ENCODE measurements at regions of chr10 and their contacts with region 1.

Region 1: GRCh38 chr10:69061305-69062161 is 26.4 kb upstream of the SRGN start:
- DNase-seq: peak; percentile 45
- ATAC-seq: peak; percentile 79
- H3K4me3 Mint-ChIP-seq: peak overlapping the region; percentile 27
- H3K27ac Mint-ChIP-seq: peak overlapping the region; percentile 45
- H3K4me1 Mint-ChIP-seq: peaks cover 57% of the 10 kb centered on the region
- H3K27me3 Mint-ChIP-seq: no peaks in the 10 kb centered on the region

Region 2: GRCh38 chr10:68981074-68981473 is 80.5 kb before region 1 on chr10:
- CTCF ChIA-PET with region 1: no interaction called
- POLR2A ChIA-PET with region 1: interaction called, 14 read pairs
- DNase-seq: no peak
- ATAC-seq: peak; percentile 69
- H3K4me3 Mint-ChIP-seq: no peak overlapping the region
- H3K27ac Mint-ChIP-seq: no peak overlapping the region
- H3K4me1 Mint-ChIP-seq: peaks cover 20% of the 10 kb centered on the region
- H3K27me3 Mint-ChIP-seq: no peaks in the 10 kb centered on the region

Region 3: DNA sequence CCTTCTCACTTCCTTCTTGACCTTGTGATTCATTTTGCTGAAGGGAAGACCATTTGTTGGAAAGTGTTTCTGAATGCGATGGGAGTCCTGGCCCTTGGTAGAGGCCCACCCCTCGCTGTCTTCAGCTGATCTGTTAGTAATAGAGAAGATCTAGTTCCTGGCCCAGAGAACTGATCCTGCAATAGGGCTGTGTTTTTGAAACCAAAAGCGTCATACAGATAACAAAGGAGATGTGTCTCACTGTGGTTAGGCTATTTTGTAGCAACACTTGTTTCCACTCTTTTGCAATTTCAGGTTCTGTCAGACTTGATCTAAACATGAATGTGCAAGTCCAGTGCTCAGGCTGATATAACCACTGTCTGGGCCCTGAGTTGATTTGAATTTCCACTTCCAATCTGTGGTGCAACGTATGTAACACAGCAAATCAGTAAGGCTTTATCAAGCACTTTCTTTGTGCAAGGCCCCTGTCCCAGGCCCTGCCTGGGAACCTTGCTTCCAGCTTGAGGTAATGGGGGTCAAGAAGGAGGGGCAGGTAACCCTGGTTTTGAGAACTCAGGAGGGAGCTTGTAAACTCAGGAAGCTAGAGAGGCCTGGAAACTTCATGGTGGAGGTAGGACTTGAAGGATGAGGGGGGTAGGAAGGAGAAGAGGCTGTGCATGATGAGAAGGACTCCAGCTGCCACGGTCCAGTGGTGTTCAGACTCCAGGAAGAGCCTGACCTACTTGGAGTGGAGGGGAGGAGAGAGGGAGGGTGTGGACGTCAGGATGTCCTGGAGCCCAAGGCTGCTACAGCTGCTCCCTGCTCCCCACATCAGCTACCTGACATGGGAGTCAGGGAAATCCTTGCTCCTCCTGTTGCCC is 15.9 kb before region 1 on chr10:
- CTCF ChIA-PET with region 1: interaction called, 19 read pairs
- POLR2A ChIA-PET with region 1: interaction called, 14 read pairs
- DNase-seq: peak; percentile 41
- ATAC-seq: peak; percentile 75
- H3K4me3 Mint-ChIP-seq: peak overlapping the region; percentile 29
- H3K27ac Mint-ChIP-seq: peak overlapping the region; percentile 95
- H3K4me1 Mint-ChIP-seq: peaks cover 44% of the 10 kb centered on the region
- H3K27me3 Mint-ChIP-seq: no peaks in the 10 kb centered on the region

Region 4: GRCh38 chr10:69051303-69051702 is 10.2 kb before region 1 on chr10:
- CTCF ChIA-PET with region 1: interaction called, 20 read pairs
- POLR2A ChIA-PET with region 1: interaction called, 10 read pairs
- DNase-seq: peak; percentile 77
- ATAC-seq: peak; percentile 70
- H3K4me3 Mint-ChIP-seq: no peak overlapping the region
- H3K27ac Mint-ChIP-seq: peak overlapping the region; percentile 70
- H3K4me1 Mint-ChIP-seq: peaks cover 59% of the 10 kb centered on the region
- H3K27me3 Mint-ChIP-seq: no peaks in the 10 kb centered on the region

Region 5: DNA sequence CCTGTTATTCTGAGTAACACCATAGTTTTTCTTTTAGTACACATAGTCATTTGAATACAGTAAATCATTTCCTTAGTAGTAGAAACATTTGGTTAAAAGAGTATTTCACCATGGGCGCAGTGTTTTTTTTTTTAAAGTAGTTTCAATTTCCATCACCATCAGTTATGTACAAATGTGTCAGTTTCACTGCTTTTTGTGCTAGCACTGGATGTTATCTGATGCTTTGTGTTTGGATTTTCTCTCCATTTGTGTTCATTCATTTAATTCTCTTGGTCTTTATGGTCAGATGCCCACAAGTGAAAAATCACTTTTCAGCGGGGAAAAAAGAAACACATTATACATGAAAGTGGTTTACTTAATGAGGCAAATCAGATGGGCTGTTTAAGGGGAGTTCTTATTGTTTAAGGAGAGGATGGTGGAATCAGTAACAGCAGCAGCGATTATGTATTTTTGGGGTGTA is 200.8 kb after region 1 on chr10:
- CTCF ChIA-PET with region 1: no interaction called
- POLR2A ChIA-PET with region 1: no interaction called
- DNase-seq: no peak
- ATAC-seq: peak; percentile 27
- H3K4me3 Mint-ChIP-seq: no peak overlapping the region
- H3K27ac Mint-ChIP-seq: peak overlapping the region; percentile 13
- H3K4me1 Mint-ChIP-seq: peaks cover 15% of the 10 kb centered on the region
- H3K27me3 Mint-ChIP-seq: peaks cover 4% of the 10 kb centered on the region